A549 (cell line): ENCODE measurements at regions of chr16 and their contacts with region 1.

Region 1: GRCh38 chr16:2076072-2076865 is 28.5 kb downstream of the TSC2 start:
- DNase-seq: no peak
- ATAC-seq: no peak
- H3K4me3 ChIP-seq: no peak overlapping the region
- H3K27ac ChIP-seq: no peak overlapping the region
- H3K4me1 ChIP-seq: no peaks in the 10 kb centered on the region
- CTCF ChIP-seq: no peak
- EP300 ChIP-seq: no peak
- POLR2A ChIP-seq: no peak
- RAD21 ChIP-seq: no peak

Region 2: DNA sequence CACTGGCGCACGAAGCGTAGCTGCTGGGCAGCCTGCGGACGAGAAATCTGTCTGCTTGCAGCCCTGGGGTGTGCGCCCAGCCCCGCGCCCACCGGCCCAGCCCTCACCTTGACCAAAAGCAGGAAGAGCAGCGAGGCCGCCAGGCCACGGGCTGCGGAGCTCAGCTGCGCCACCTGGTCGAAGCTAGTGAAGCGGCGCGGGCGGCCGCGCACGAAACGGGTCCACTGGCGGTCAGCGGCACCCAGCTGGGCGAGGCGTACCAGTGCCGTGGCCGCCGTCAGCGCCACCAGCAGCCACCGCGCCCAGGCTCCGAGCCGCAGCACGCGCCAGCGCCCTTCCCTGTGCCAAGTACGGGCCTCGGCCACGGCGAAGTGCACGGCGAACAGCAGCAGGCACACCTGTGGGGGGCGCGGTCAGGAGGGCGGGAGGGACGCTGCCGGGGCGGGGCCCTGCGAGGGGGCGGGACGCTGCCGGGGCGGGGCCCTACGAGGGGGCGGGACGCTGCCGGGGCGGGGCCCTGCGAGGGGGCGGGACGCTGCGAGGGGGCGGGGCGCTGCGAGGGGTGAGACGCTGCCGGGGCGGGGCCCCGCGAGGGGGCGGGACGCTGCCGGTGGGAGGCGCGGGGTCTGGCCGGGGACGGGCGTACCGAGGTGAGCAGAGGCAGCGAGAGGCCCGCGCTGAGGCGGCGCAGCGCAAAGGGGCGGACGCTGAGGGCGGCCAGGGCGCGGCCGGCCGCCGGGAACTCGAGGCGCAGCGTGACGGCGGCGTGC is 14.7 kb after region 1 on chr16:
- CTCF ChIA-PET with region 1: interaction called, 22 read pairs
- POLR2A ChIA-PET with region 1: no interaction called
- DNase-seq: peak in 1 of 2 experiments; percentile 66
- ATAC-seq: peak; percentile 10 to 20; a peak in 3 of 6 replicates
- H3K4me3 ChIP-seq: no peak overlapping the region
- H3K27ac ChIP-seq: peak overlapping the region in 1 of 2 experiments; percentile 52; a peak in 2 of 6 replicates
- H3K4me1 ChIP-seq: no peaks in the 10 kb centered on the region
- CTCF ChIP-seq: 0 out of 3 replicates have a peak, but pooled peaks have one; percentile 15
- EP300 ChIP-seq: no peak
- POLR2A ChIP-seq: no peak
- RAD21 ChIP-seq: peak in 1 of 2 experiments; percentile 15; a peak in 1 of 5 replicates